Endothelial cell of umbilical vein (primary cell): ENCODE measurements at regions of chr4 and their contacts with region 1.

Region 1: GRCh38 chr4:76949276-76950051 is at the start of gene SEPTIN11:
- DNase-seq: peak; percentile 92
- H3K4me3 ChIP-seq: peak within 1 kb of the TSS; percentile 73 to 95 (median 74)
- H3K27ac ChIP-seq: peak within 1 kb of the TSS; percentile 81
- H3K4me1 ChIP-seq: peaks cover 19% of the 10 kb centered on the region
- H3K27me3 ChIP-seq: no peaks in the 10 kb centered on the region
- CTCF ChIP-seq: peak in 1 of 2 donors; percentile 5
- POLR2A ChIP-seq: peak; percentile 96
- total RNA-seq, gene SEPTIN11: 168 and 202 TPM in 2 replicates

Region 2: DNA sequence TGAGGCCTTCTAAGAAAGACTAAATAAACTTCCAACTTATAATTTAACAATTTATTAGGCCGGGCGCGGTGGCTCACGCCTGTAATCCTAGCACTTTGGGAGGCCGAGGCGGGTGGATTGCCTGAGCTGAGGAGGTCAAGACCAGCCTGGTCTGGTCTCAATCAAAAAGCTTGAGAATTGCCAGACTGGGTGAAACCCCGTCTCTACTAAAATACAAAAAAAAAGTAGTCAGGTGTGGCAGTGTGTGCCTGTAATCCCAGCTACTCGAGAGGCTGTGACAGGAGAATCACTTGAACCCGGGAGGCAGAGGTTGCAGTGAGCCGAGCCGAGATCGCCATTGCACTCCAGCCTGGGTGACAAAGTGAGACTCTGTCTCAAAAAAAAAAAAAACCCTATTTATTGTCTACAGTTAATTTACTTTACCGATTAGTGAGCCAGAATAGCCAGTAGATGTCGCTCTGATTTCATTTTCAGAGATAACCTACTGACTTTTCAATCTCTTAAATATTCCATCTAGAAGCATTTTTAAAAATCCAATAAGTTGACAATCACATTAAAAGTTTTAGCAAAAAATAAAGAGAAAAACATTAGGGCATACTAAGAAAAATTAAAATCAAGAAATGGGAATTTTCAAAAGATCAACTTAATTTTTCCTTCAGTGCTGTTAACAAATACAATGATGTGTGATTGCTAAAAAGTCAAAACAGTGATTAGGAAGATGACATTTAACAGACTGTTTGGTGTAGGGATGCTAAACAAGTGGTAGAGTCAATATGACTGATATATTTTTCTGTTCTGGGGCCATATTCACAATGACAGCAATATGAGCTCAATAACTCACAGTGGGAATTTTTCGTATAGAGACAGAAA is 518.7 kb before region 1 on chr4:
- CTCF ChIA-PET with region 1: no interaction called
- POLR2A ChIA-PET with region 1: no interaction called
- dilution Hi-C with region 1: no loop called
- intact Hi-C with region 1: loop called (anchors 5 kb)
- DNase-seq: peak; percentile 61
- H3K4me3 ChIP-seq: no peak overlapping the region
- H3K27ac ChIP-seq: no peak overlapping the region
- H3K4me1 ChIP-seq: no peaks in the 10 kb centered on the region
- H3K27me3 ChIP-seq: peaks cover 14 to 26% of the 10 kb centered on the region in 2 experiments
- CTCF ChIP-seq: peak; percentile 39
- POLR2A ChIP-seq: no peak

Region 3: DNA sequence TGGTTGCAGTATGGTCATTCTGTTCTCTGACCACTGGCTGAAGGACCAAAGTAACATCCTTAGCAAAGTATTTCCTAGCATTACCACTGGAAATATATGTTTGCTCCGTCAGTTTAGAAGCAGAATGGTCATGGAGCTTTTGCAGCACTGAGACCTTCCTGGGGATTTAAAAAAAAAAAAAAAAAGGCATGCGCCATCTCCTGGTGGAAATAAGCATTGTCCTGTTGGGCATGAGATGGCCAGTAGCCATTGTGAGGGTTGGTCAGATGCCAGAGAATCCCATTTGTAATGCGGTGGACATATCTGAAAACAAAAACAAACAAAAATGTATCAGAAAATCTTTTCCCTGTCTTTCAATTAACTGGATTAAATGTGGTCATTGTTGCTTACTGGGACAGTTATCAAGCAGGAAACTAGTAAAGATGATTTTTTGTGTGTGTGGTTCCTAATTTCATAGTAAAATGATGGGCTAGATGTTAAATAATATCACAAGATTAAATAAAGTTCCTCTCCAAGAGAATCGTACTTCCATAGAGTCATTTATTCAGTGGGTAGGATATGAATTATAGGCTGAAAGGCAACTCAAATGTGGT is 191.1 kb before region 1 on chr4:
- CTCF ChIA-PET with region 1: no interaction called
- POLR2A ChIA-PET with region 1: no interaction called
- dilution Hi-C with region 1: no loop called
- intact Hi-C with region 1: loop called (anchors 2 kb)
- DNase-seq: peak; percentile 78
- H3K4me3 ChIP-seq: no peak overlapping the region
- H3K27ac ChIP-seq: no peak overlapping the region
- H3K4me1 ChIP-seq: peaks cover 17% of the 10 kb centered on the region
- H3K27me3 ChIP-seq: no peaks in the 10 kb centered on the region
- CTCF ChIP-seq: peak; percentile 66 to 84
- POLR2A ChIP-seq: no peak

Region 4: GRCh38 chr4:76830964-76831703 is 118.3 kb before region 1 on chr4:
- CTCF ChIA-PET with region 1: no interaction called
- POLR2A ChIA-PET with region 1: no interaction called
- dilution Hi-C with region 1: no loop called
- intact Hi-C with region 1: loop called (anchors 1 kb)
- DNase-seq: peak; percentile 98
- H3K4me3 ChIP-seq: no peak overlapping the region
- H3K27ac ChIP-seq: peak overlapping the region; percentile 78
- H3K4me1 ChIP-seq: peaks cover 23% of the 10 kb centered on the region
- H3K27me3 ChIP-seq: no peaks in the 10 kb centered on the region
- CTCF ChIP-seq: no peak
- POLR2A ChIP-seq: peak; percentile 57

Region 5: GRCh38 chr4:76896731-76897535 is 52.5 kb before region 1 on chr4:
- CTCF ChIA-PET with region 1: no interaction called
- POLR2A ChIA-PET with region 1: interaction called, 3 read pairs
- dilution Hi-C with region 1: no loop called
- intact Hi-C with region 1: loop called (anchors 2 kb)
- DNase-seq: peak; percentile 35
- H3K4me3 ChIP-seq: peak overlapping the region in 2 of 3 experiments; percentile 2 to 35
- H3K27ac ChIP-seq: no peak overlapping the region
- H3K4me1 ChIP-seq: peaks cover 4% of the 10 kb centered on the region
- H3K27me3 ChIP-seq: peaks cover 42 to 75% of the 10 kb centered on the region in 2 experiments
- CTCF ChIP-seq: no peak
- POLR2A ChIP-seq: no peak

Region 6: GRCh38 chr4:76984127-76984526 is 34.7 kb after region 1 on chr4:
- CTCF ChIA-PET with region 1: interaction called, 5 read pairs
- POLR2A ChIA-PET with region 1: no interaction called
- dilution Hi-C with region 1: no loop called
- intact Hi-C with region 1: loop called (anchors 1 kb)
- DNase-seq: peak; percentile 84
- H3K4me3 ChIP-seq: peak overlapping the region in 1 of 3 experiments; percentile 1
- H3K27ac ChIP-seq: peak overlapping the region; percentile 65
- H3K4me1 ChIP-seq: peaks cover 41% of the 10 kb centered on the region
- H3K27me3 ChIP-seq: no peaks in the 10 kb centered on the region
- CTCF ChIP-seq: peak; percentile 46 to 51
- POLR2A ChIP-seq: no peak

Region 7: GRCh38 chr4:77044461-77045150 is 95.1 kb after region 1 on chr4:
- CTCF ChIA-PET with region 1: interaction called, 23 read pairs
- POLR2A ChIA-PET with region 1: no interaction called
- dilution Hi-C with region 1: no loop called
- intact Hi-C with region 1: loop called (anchors 1 kb)
- DNase-seq: peak; percentile 67
- H3K4me3 ChIP-seq: no peak overlapping the region
- H3K27ac ChIP-seq: no peak overlapping the region
- H3K4me1 ChIP-seq: peaks cover 7% of the 10 kb centered on the region
- H3K27me3 ChIP-seq: no peaks in the 10 kb centered on the region
- CTCF ChIP-seq: peak; percentile 37 to 46
- POLR2A ChIP-seq: no peak